Endothelial cell of umbilical vein (primary cell): ENCODE measurements at regions of chr1 and their contacts with region 1.

Region 1: GRCh38 chr1:183871142-183871541 is 66.2 kb downstream of the RGL1 start:
- DNase-seq: peak; percentile 93
- H3K4me3 ChIP-seq: peak overlapping the region in 1 of 3 experiments; percentile 15
- H3K27ac ChIP-seq: peak overlapping the region; percentile 99
- H3K4me1 ChIP-seq: peaks cover 63% of the 10 kb centered on the region
- H3K27me3 ChIP-seq: no peaks in the 10 kb centered on the region
- CTCF ChIP-seq: no peak
- POLR2A ChIP-seq: peak; percentile 62

Region 2: GRCh38 chr1:183757061-183757460 is 114.1 kb before region 1 on chr1:
- CTCF ChIA-PET with region 1: no interaction called
- POLR2A ChIA-PET with region 1: no interaction called
- dilution Hi-C with region 1: no loop called
- intact Hi-C with region 1: loop called (anchors 1 kb)
- DNase-seq: peak; percentile 55
- H3K4me3 ChIP-seq: no peak overlapping the region
- H3K27ac ChIP-seq: peak overlapping the region; percentile 32
- H3K4me1 ChIP-seq: peaks cover 18% of the 10 kb centered on the region
- H3K27me3 ChIP-seq: no peaks in the 10 kb centered on the region
- CTCF ChIP-seq: no peak
- POLR2A ChIP-seq: no peak

Region 3: GRCh38 chr1:183837062-183837461 is 34.1 kb before region 1 on chr1:
- CTCF ChIA-PET with region 1: interaction called, 4 read pairs
- POLR2A ChIA-PET with region 1: no interaction called
- dilution Hi-C with region 1: no loop called
- intact Hi-C with region 1: loop called (anchors 1 kb)
- DNase-seq: no peak
- H3K4me3 ChIP-seq: no peak overlapping the region
- H3K27ac ChIP-seq: no peak overlapping the region
- H3K4me1 ChIP-seq: peaks cover 35% of the 10 kb centered on the region
- H3K27me3 ChIP-seq: no peaks in the 10 kb centered on the region
- CTCF ChIP-seq: no peak
- POLR2A ChIP-seq: no peak

Region 4: GRCh38 chr1:183850852-183851251 is 20.3 kb before region 1 on chr1:
- CTCF ChIA-PET with region 1: interaction called, 4 read pairs
- POLR2A ChIA-PET with region 1: no interaction called
- dilution Hi-C with region 1: no loop called
- intact Hi-C with region 1: loop called (anchors 2 kb)
- DNase-seq: peak; percentile 63
- H3K4me3 ChIP-seq: no peak overlapping the region
- H3K27ac ChIP-seq: peak overlapping the region; percentile 60
- H3K4me1 ChIP-seq: peaks cover 38% of the 10 kb centered on the region
- H3K27me3 ChIP-seq: no peaks in the 10 kb centered on the region
- CTCF ChIP-seq: no peak
- POLR2A ChIP-seq: no peak

Region 5: GRCh38 chr1:183891158-183891856 is 20.2 kb after region 1 on chr1:
- CTCF ChIA-PET with region 1: interaction called, 5 read pairs
- POLR2A ChIA-PET with region 1: no interaction called
- dilution Hi-C with region 1: no loop called
- intact Hi-C with region 1: loop called (anchors 1 kb)
- DNase-seq: no peak
- H3K4me3 ChIP-seq: no peak overlapping the region
- H3K27ac ChIP-seq: no peak overlapping the region
- H3K4me1 ChIP-seq: peaks cover 26% of the 10 kb centered on the region
- H3K27me3 ChIP-seq: no peaks in the 10 kb centered on the region
- CTCF ChIP-seq: no peak
- POLR2A ChIP-seq: no peak